AG04449 (cell line): ENCODE measurements at regions of chr19 and their contacts with region 1.

Region 1: GRCh38 chr19:8412783-8413628 is at the start of gene MARCHF2:
- DNase-seq: peak; percentile 74
- H3K4me3 ChIP-seq: peak within 1 kb of the TSS; percentile 67
- CTCF ChIP-seq: peak; percentile 57

Region 2: GRCh38 chr19:8423817-8424223 is 10.8 kb after region 1 on chr19:
- CTCF ChIA-PET with region 1: interaction called, 46 read pairs
- POLR2A ChIA-PET with region 1: interaction called, 14 read pairs
- DNase-seq: peak; percentile 65
- H3K4me3 ChIP-seq: no peak overlapping the region
- CTCF ChIP-seq: no peak

Region 3: GRCh38 chr19:8444645-8445487 is 31.9 kb after region 1 on chr19 and contains the start of gene HNRNPM:
- CTCF ChIA-PET with region 1: interaction called, 11 read pairs
- POLR2A ChIA-PET with region 1: interaction called, 3 read pairs
- DNase-seq: no peak
- H3K4me3 ChIP-seq: peak within 1 kb of the TSS; percentile 89
- CTCF ChIP-seq: no peak

Region 4: GRCh38 chr19:8459520-8460259 is 46.7 kb after region 1 on chr19:
- CTCF ChIA-PET with region 1: interaction called, 12 read pairs
- POLR2A ChIA-PET with region 1: interaction called, 4 read pairs
- DNase-seq: no peak
- H3K4me3 ChIP-seq: no peak overlapping the region; the same call in 1 of the 2 replicates
- CTCF ChIP-seq: no peak

Region 5: GRCh38 chr19:8505680-8506401 is 92.8 kb after region 1 on chr19:
- CTCF ChIA-PET with region 1: interaction called, 26 read pairs
- POLR2A ChIA-PET with region 1: no interaction called
- DNase-seq: no peak
- H3K4me3 ChIP-seq: peak overlapping the region; percentile 64
- CTCF ChIP-seq: peak; percentile 87

Region 6: GRCh38 chr19:8513687-8514504 is 100.9 kb after region 1 on chr19 and contains the start of gene ZNF414:
- CTCF ChIA-PET with region 1: interaction called, 13 read pairs
- POLR2A ChIA-PET with region 1: interaction called, 6 read pairs
- DNase-seq: peak; percentile 84
- H3K4me3 ChIP-seq: peak within 1 kb of the TSS; percentile 79
- CTCF ChIP-seq: no peak